Breast epithelium (tissue), 4 donors: ENCODE measurements at regions of chr12 and their contacts with region 1.

Region 1: DNA sequence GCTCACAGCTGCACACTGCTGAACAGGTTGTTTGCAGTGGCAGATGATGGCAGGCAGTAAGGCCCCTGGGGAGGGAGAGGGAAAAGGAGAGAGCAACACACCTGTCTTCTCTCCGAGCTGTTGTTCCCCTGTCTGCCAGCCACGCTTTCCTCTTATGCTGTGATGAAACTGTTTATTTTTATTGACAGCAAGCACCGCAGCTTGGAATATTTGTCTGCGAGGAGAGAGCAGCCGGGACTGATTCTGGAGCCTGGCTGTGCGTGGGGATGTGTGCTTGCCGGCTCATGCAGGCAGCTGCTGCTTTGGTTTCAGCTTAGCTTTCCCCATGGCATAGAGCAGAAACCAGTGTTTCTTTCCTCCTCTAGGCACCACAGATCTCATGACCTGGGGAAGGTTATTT is 58.7 kb upstream of the KCNA5 start:
- DNase-seq: no peak
- H3K4me3 ChIP-seq: no peak overlapping the region
- H3K27ac ChIP-seq: no peak overlapping the region
- H3K4me1 ChIP-seq: no peaks in the 10 kb centered on the region
- H3K27me3 ChIP-seq: no peaks in the 10 kb centered on the region
- CTCF ChIP-seq: no peak
- POLR2A ChIP-seq: no peak

Region 2: DNA sequence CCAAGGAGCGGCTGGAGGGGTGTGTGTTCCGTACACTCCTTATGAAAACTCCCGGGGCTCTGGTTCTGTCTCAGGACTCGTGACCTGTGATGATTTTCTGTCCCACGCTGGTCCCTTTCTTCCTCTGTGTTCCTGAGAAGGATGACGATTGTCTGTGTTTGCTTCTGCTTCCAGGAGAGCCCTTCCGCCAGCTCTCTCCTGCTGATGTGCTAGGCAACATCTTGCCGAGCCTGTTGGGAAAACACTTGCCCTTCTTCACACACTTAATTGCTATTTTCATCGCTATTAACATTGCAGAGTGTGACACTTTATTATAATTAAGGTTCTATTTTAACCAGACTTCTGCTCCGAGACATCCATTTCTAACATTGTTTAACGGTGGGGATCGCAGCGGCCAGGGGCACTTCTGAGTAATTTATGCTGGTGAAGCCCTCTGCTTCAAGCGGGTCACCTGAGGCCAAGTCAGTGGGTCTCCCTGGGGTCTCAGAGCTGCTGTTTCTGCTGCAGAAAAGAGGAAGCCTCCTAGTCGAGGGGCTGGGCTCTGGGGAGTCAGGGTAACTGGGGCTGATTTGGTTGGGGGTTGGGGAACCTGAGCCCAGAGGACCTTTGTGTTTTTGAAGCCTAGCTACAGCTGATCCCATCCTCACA is 1405.4 kb before region 1 on chr12:
- intact Hi-C with region 1: loop called (anchors 5 kb)
- DNase-seq: no peak
- H3K4me3 ChIP-seq: no peak overlapping the region
- H3K27ac ChIP-seq: no peak overlapping the region
- H3K4me1 ChIP-seq: no peaks in the 10 kb centered on the region
- H3K27me3 ChIP-seq: no peaks in the 10 kb centered on the region
- CTCF ChIP-seq: no peak
- POLR2A ChIP-seq: no peak